GM10248 (cell line): ENCODE measurements at regions of chr1 and their contacts with region 1.

Region 1: DNA sequence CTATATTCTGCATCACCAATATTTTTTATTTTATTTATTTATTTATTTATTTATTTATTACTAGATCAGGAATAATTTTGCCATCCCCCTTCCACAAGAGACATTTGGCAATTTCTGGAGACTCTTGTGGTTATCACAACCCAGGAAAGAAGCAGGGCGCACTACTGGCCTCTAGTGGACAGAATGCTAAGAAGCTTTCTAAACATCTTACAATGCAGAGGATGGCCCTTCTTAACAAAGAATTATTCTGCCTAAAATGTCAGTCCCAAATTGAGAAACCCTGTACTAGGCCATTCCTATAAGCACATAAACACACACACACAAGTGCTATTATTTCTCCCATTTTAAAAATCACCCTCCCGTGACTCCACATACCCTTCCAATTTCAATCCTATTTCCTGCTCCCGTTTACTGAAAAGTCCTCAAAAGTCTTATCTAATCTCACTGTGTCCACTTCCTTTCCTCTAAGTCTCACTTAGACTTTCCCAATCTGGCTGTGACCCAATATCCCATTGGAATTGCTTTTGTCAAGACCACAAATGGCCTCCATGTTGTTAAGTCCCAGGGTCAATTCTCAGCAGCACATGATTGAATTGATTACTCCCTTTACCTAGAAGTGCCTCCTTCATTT is 43.7 kb upstream of the RNF11 start:
- DNase-seq: peak; percentile 43
- CTCF ChIP-seq: peak; percentile 77

Region 2: GRCh38 chr1:50873458-50874187 is 318.7 kb before region 1 on chr1:
- CTCF ChIA-PET with region 1: interaction called, 138 read pairs
- POLR2A ChIA-PET with region 1: no interaction called
- DNase-seq: peak; percentile 62
- CTCF ChIP-seq: peak; percentile 76

Region 3: GRCh38 chr1:51088488-51088887 is 103.8 kb before region 1 on chr1:
- CTCF ChIA-PET with region 1: interaction called, 23 read pairs
- POLR2A ChIA-PET with region 1: no interaction called
- DNase-seq: no peak
- CTCF ChIP-seq: peak; percentile 15

Region 4: GRCh38 chr1:51203121-51203873 is 11.0 kb after region 1 on chr1:
- CTCF ChIA-PET with region 1: interaction called, 68 read pairs
- POLR2A ChIA-PET with region 1: no interaction called
- DNase-seq: peak; percentile 53
- CTCF ChIP-seq: no peak

Region 5: GRCh38 chr1:51296383-51297357 is 104.3 kb after region 1 on chr1:
- CTCF ChIA-PET with region 1: interaction called, 10 read pairs
- POLR2A ChIA-PET with region 1: no interaction called
- DNase-seq: peak; percentile 87
- CTCF ChIP-seq: peak; percentile 98

Region 6: DNA sequence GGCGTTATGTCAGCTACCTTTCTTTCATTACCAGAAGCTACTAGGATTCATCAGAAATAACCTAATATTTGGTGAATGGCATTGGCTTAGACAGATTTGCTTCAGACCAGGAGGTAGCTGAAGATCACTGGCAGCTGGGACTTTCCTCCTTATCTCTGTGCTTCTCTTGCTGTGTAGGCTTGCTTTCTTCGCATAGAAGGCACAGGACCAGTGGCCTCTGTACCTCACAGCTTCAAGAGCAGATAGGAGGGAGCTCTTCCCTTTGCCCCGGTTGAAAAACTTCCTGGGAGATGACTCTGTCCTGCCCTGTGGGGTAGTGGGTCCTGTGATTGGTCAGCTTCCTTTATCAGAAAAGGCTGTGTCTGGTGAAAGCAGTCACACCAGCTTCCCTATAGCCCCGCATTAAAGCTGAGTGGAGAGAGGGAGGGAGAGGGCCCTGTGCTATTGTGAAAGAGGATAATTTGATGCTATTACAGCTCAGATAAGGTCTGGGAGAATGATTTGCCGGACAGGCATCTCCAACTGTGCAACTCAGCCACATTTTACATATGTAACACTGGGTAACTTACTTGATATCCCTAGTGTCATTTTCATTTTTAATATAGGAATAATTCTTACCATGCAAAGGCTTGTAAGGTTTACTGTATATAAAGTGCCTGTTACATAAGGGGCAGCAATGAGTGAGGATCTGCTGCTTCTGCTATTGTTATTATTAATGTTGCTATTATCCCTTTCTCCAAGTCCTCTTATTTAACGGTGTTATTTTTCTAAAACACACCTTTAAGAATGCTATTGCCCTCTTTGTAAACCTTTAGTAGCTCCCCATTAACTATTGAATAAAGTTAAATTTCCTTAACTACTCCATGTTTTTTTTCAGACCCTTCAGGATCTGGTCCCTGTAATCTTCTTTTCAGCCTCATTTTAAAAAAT is 456.1 kb after region 1 on chr1:
- CTCF ChIA-PET with region 1: no interaction called
- POLR2A ChIA-PET with region 1: no interaction called
- DNase-seq: no peak
- CTCF ChIP-seq: no peak

Region 7: DNA sequence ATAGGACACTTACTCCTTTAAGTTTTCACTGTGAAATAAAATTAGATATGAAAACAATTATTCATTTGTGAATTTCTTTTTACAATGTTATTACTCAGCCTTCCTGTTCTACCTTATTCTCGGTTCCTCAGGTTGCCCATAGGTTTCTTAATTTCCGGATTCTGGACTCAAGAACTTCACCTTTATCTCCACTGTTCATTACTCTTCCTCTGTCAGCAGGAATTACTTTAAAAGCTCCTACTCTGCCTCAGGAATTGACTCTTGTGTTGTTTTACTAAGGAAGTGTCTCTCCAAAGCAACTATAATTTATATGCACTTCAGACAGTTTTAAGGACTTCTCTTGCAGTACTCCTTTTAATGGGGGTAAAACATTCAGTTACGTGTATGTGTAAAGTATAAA is 548.3 kb after region 1 on chr1:
- CTCF ChIA-PET with region 1: no interaction called
- POLR2A ChIA-PET with region 1: no interaction called
- DNase-seq: no peak
- CTCF ChIP-seq: no peak